Sciatic nerve (tissue), 2 donors: ENCODE measurements at regions of chr1 and their contacts with region 1.

Region 1: GRCh38 chr1:31789259-31790065 is 25.3 kb upstream of the ADGRB2 start:
- DNase-seq: peak; percentile 99
- ATAC-seq: peak; percentile 92

Region 2: DNA sequence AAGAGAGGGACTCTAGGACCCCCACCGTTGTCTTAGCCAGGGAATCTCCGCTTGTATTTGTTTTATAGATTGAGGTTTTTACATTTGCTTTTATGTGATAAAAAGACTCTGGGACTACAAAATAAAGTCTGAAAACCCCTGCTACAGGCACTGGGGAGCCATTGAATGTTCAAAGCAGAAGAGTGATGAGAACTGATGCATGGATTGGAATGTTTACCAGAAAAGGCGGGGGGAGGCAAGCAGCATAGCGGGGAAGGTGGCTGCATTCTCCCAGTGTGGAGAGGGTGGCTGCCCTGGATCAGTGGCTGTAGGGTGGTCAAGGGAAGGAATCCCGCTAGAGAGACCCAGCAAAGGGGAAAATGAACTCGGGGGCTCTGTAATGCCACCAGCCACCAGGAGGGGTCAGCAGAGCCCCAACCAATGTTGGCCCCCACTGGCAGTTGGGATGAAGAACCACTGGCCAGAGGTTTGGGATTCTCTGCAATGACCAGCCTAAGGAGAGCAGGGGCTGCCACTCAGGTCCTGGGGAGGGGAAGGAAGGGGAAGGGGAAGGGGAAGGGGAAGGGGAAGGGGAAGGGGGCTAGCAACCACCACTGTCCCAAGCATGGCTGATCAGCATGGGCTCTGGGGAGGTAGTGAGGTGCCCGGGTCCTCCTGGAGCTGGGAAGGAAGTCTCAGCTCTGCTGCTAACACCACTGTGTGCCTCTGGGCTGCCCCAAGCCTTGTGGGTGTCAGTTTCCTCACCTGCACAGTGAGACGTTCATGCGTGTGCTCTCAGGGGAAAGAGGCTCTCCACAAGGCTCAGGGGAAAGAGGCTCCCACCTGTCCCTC is 125.6 kb before region 1 on chr1:
- intact Hi-C with region 1: loop called (anchors 5 kb)
- DNase-seq: peak; percentile 83
- ATAC-seq: peak; percentile 52